ENCODE measurements at regions of chr16 and their contacts with region 1.

Region 1: GRCh38 chr16:30437486-30438046 is 7.7 kb upstream of the DCTPP1 start:
- DNase-seq: no peak
- ATAC-seq: no peak
- H3K4me3 ChIP-seq: no peak overlapping the region
- H3K27ac ChIP-seq: no peak overlapping the region
- H3K4me1 ChIP-seq: peaks cover 0 to 6% (median 0%) of the 10 kb centered on the region in 12 donors
- H3K27me3 ChIP-seq: no peaks in the 10 kb centered on the region
- CTCF ChIP-seq: no peak
- POLR2A ChIP-seq: no peak

Region 2: GRCh38 chr16:30335598-30336474 is 101.7 kb before region 1 on chr16:
- intact Hi-C with region 1: no loop called
- DNase-seq: peak in 3 of 5 donors; percentile 25 to 56 (median 32)
- ATAC-seq: peak; percentile 28 to 65 (median 38)
- H3K4me3 ChIP-seq: peak overlapping the region; percentile 49 to 95 (median 78)
- H3K27ac ChIP-seq: peak overlapping the region in 11 of 12 donors; percentile 93 to 98 (median 97)
- H3K4me1 ChIP-seq: peaks cover 0 to 13% (median 7%) of the 10 kb centered on the region in 12 donors
- H3K27me3 ChIP-seq: no peaks in the 10 kb centered on the region
- CTCF ChIP-seq: no peak
- POLR2A ChIP-seq: no peak

Region 3: DNA sequence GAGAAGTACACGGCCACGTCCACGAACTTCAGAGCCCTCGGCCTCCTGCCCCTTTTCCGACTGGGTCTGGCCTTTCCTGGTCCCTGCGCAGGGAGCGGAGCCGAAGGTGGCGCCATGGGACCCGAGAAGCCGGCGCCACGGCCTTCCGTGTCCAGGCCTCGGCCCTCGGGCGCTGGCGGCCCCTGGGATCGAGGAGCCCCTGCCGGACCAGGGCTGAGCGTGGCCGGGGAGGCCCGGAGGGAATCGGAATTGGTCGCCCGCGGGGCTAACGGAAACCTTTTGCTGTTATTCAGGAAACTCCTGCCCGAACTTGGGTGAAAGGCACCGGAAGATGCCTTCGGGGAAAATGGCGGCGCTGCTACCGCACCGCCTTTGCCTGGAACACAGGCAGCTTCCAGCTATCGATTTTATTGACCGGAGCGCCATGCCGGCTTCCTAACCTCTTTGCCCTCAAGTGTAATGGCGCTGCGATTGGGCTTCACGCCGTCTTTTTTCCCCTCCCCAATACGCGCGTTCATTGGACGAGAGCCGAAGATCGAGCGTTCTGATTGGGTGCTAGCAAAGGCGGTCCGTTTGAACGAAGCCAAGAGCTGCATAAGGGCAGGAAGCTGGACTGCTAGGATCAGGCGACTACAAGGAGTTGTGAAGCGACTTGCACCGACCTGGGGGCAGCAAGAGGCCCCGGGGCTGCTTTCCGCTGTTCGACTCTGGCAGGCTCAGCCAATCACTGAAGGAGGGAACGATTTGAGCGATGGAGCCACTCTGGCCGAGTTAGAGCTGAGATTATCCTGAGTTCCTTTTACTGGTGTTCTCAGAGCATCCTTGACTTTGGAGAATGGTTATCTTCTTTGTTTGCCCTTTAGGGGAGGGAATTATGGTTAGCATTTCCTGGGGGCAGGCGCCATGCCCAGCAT is 172.6 kb after region 1 on chr16 and contains the start of gene ZNF689:
- intact Hi-C with region 1: loop called in 3 of 10 experiments (anchors 5 to 10 kb)
- DNase-seq: peak; percentile 93 to 95 (median 94)
- ATAC-seq: peak; percentile 95 to 99 (median 97)
- H3K4me3 ChIP-seq: peak within 1 kb of the TSS; percentile 64 to 99 (median 88)
- H3K27ac ChIP-seq: peak within 1 kb of the TSS; percentile 84 to 99 (median 97)
- H3K4me1 ChIP-seq: peaks cover 0 to 47% (median 10%) of the 10 kb centered on the region in 12 donors
- H3K27me3 ChIP-seq: no peaks in the 10 kb centered on the region
- CTCF ChIP-seq: peak in 1 of 12 donors; percentile 10
- POLR2A ChIP-seq: peak in 1 of 2 donors; percentile 50
- total RNA-seq, gene ZNF689: 4.0 to 7.9 (median 6.6) TPM

Region 4: GRCh38 chr16:30621765-30622164 is 184.2 kb after region 1 on chr16:
- intact Hi-C with region 1: loop called in 4 of 10 experiments (anchors 5 to 10 kb)
- DNase-seq: no peak
- ATAC-seq: no peak
- H3K4me3 ChIP-seq: no peak overlapping the region
- H3K27ac ChIP-seq: no peak overlapping the region
- H3K4me1 ChIP-seq: peaks cover 0 to 4% (median 0%) of the 10 kb centered on the region in 12 donors
- H3K27me3 ChIP-seq: no peaks in the 10 kb centered on the region
- CTCF ChIP-seq: no peak
- POLR2A ChIP-seq: no peak